Activated CD8-positive, alpha-beta T cell treated with anti-CD3 and anti-CD28 coated beads for 36 hours (primary cell): ENCODE measurements at regions of chr6 and their contacts with region 1.

Region 1: GRCh38 chr6:159134701-159135364 is 34.4 kb upstream of the FNDC1 start:
- DNase-seq: peak; percentile 88
- ATAC-seq: peak; percentile 99
- H3K4me3 Mint-ChIP-seq: no peak overlapping the region
- H3K27ac Mint-ChIP-seq: no peak overlapping the region
- H3K4me1 Mint-ChIP-seq: no peaks in the 10 kb centered on the region
- H3K27me3 Mint-ChIP-seq: peaks cover 5% of the 10 kb centered on the region
- CTCF ChIP-seq: peak; percentile 98

Region 2: GRCh38 chr6:158972241-158973233 is 162.3 kb before region 1 on chr6:
- CTCF ChIA-PET with region 1: interaction called, 43 read pairs
- POLR2A ChIA-PET with region 1: interaction called, 3 read pairs
- intact Hi-C with region 1: no loop called
- DNase-seq: no peak
- ATAC-seq: peak; percentile 71
- H3K4me3 Mint-ChIP-seq: no peak overlapping the region
- H3K27ac Mint-ChIP-seq: no peak overlapping the region
- H3K4me1 Mint-ChIP-seq: no peaks in the 10 kb centered on the region
- H3K27me3 Mint-ChIP-seq: no peaks in the 10 kb centered on the region
- CTCF ChIP-seq: peak; percentile 81

Region 3: DNA sequence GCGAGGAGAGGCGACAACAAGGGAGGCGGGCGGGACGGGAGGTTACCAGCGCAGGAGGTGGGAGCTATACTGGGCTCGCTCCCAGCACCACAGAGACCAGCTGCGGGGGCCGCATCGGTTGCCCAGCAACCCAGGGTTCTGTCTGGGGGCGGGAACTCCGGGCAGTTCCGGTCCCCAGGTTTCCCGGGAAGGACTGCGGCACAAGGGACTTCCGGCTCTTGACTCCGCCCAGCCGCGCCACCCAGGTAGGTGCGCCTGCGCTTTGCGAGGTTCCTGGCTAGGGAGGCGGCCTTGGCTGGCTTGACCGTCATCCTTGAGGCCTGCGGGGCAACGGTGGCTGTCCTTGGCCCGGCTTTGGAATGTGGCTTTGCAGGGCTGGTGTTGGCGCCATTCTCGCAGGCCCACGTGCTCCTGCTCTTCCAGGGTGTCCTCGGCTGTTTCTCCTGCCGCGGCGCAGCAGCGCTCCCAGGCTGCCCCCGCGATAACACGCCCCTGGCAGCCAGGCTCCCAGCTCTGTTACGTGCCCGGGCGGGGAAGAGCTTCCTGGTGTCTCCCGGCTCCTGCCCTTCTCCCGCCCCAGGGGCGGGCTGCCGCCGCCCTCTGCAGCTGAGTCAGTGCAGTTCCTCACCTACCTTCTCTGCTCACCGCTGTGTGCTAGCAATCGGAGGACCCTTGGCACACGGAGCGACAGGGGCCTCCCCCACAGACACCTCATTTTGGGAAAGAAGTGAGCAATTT is 135.0 kb before region 1 on chr6 and contains the start of gene RSPH3:
- CTCF ChIA-PET with region 1: interaction called, 246 read pairs
- POLR2A ChIA-PET with region 1: no interaction called
- intact Hi-C with region 1: no loop called
- DNase-seq: peak; percentile 96
- ATAC-seq: peak; percentile 89
- H3K4me3 Mint-ChIP-seq: peak within 1 kb of the TSS; percentile 83
- H3K27ac Mint-ChIP-seq: peak within 1 kb of the TSS; percentile 81
- H3K4me1 Mint-ChIP-seq: peaks cover 42% of the 10 kb centered on the region
- H3K27me3 Mint-ChIP-seq: no peaks in the 10 kb centered on the region
- CTCF ChIP-seq: no peak
- total RNA-seq, gene RSPH3: 4.2 TPM

Region 4: DNA sequence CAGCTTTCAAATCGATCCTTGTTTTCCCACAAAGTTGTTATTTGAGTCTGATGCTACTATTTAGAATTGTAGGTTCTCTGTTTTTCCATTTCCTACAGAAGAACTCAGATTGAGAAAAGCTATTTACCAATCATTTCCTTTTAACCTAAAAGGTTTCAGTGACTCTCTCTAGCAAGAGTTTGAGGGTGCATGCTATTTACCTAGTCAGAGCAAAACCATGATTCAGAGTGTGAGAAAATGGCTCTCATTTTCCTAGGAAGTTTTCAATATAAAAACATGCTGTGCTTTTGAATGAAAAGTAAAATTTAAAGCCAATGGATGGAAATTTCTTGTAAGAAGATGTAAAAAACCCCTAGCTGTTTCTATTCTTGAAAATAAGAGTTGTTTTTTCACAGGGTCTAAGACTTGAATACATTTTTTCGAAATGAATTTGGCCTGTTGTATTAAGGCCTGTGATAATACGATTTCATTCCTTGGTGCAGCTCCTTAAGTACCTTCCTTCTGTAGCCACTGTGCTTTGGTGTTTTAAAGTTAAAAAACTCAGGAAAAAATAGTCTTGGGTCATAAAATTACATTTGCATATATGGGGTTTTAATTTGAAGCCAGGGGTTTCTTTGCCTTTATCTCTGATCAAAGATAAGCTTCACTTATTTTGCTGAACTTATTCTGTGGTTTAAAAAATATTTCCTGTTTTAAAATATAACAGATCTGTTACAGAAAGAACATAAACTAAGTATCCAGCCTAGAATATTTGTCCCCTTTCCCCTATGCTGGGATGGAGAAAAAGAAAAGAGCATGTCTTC is 116.9 kb before region 1 on chr6:
- CTCF ChIA-PET with region 1: interaction called, 16 read pairs
- POLR2A ChIA-PET with region 1: no interaction called
- intact Hi-C with region 1: no loop called
- DNase-seq: no peak
- ATAC-seq: peak; percentile 85
- H3K4me3 Mint-ChIP-seq: peak overlapping the region; percentile 14
- H3K27ac Mint-ChIP-seq: peak overlapping the region; percentile 96
- H3K4me1 Mint-ChIP-seq: peaks cover 68% of the 10 kb centered on the region
- H3K27me3 Mint-ChIP-seq: no peaks in the 10 kb centered on the region
- CTCF ChIP-seq: no peak

Region 5: DNA sequence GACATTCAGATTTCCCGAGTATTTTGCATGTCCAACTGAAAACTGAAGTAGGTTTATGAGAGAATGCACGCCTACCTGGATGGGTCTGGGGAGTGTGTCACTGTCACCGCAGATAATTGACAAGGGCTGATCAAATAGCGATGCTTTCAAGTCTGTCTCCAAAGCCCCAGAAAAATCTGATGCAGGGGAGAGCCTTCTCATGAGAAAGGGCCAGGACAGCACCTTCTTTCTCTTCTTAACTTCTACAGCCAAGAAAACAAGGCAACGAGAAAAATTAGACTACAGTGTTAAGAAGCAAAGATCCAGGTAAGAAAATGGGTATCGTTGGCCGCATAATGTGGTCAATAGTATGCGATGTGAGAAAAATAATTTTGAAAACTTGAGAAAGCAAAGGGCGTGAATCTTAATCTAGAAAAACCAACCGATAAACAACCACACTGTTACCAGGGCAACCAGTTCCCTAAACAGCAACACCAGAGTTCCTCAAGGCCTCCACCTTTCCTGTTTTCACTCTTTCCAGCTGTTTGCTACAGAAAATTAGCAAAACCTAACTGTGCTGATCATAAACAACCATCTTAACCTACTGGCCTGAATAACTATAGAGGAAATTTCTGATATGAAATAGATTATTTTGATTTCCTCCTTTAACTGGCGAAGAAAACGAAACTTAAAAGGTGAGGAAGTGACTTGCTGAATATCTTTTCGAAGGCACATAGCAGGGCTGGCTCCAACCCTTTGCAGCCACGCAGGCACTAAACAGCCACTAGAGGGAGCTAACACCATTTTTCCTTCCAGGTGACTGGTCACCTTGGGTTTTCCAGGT is 92.6 kb before region 1 on chr6:
- CTCF ChIA-PET with region 1: interaction called, 29 read pairs
- POLR2A ChIA-PET with region 1: interaction called, 3 read pairs
- intact Hi-C with region 1: no loop called
- DNase-seq: peak; percentile 82
- ATAC-seq: peak; percentile 21
- H3K4me3 Mint-ChIP-seq: peak overlapping the region; percentile 100
- H3K27ac Mint-ChIP-seq: peak overlapping the region; percentile 100
- H3K4me1 Mint-ChIP-seq: peaks cover 53% of the 10 kb centered on the region
- H3K27me3 Mint-ChIP-seq: no peaks in the 10 kb centered on the region
- CTCF ChIP-seq: peak; percentile 96

Region 6: DNA sequence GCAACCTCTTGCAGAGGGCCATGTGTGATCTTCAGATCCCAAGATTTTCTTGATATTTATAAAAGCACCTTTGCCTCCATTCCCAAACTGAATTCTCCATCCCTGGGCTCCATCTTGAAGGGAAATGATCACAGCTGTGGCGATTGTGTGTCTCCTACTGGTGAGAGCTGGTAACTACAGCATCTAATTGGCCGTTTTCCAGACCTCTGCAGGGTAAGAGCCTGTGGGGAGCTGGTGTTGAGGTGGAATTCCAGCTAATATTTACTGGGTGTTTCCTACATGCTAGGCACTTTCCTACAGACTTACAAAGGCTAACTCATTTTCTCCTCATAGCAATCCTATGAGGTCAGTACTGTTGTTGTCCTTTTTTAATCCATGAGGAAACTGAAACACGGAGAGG is 24.8 kb before region 1 on chr6:
- CTCF ChIA-PET with region 1: interaction called, 71 read pairs
- POLR2A ChIA-PET with region 1: interaction called, 5 read pairs
- intact Hi-C with region 1: no loop called
- DNase-seq: peak; percentile 52
- ATAC-seq: no peak
- H3K4me3 Mint-ChIP-seq: no peak overlapping the region
- H3K27ac Mint-ChIP-seq: peak overlapping the region; percentile 40
- H3K4me1 Mint-ChIP-seq: peaks cover 52% of the 10 kb centered on the region
- H3K27me3 Mint-ChIP-seq: no peaks in the 10 kb centered on the region
- CTCF ChIP-seq: peak; percentile 95

Region 7: DNA sequence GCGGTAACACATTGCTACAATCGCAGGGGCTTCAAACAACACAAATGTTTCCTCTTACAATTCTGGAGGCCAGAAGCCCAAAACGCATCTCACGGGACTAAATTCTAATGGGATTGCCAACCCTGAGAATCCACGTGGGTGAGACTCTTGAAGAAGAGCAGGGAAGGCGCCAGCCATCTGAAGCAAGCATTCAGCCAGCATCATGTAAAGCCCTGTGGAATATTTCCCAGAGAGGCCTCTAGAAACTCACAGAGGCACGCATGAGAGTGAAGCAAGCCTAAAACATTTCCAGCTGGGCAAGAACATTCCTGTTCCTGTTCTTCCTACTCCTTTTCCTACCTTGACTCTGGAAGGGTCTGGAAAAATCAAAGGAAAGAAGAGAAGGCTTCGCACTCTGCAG is 14.8 kb after region 1 on chr6:
- CTCF ChIA-PET with region 1: interaction called, 73 read pairs
- POLR2A ChIA-PET with region 1: interaction called, 3 read pairs
- intact Hi-C with region 1: no loop called
- DNase-seq: no peak
- ATAC-seq: no peak
- H3K4me3 Mint-ChIP-seq: no peak overlapping the region
- H3K27ac Mint-ChIP-seq: no peak overlapping the region
- H3K4me1 Mint-ChIP-seq: peaks cover 2% of the 10 kb centered on the region
- H3K27me3 Mint-ChIP-seq: peaks cover 3% of the 10 kb centered on the region
- CTCF ChIP-seq: no peak

Region 8: DNA sequence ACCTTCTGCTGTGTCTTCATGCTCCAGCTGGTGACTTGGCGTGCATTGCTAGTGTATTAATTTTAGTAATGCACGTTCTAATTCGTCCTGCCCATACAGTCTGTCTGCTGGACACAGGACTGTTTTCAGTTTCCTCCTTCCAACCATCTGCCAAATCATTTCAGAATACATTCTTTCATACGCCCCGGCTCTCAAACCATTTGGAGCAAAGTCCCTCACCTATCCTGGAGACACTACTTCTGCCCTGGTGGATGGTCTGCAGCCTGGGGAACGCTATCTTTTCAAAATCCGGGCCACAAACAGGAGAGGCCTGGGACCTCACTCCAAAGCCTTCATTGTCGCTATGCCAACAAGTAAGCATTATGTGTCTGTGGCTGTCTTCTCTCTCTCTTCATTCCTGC is 94.8 kb after region 1 on chr6:
- CTCF ChIA-PET with region 1: no interaction called
- POLR2A ChIA-PET with region 1: no interaction called
- intact Hi-C with region 1: no loop called
- DNase-seq: no peak
- ATAC-seq: no peak
- H3K4me3 Mint-ChIP-seq: no peak overlapping the region
- H3K27ac Mint-ChIP-seq: no peak overlapping the region
- H3K4me1 Mint-ChIP-seq: peaks cover 2% of the 10 kb centered on the region
- H3K27me3 Mint-ChIP-seq: peaks cover 31% of the 10 kb centered on the region
- CTCF ChIP-seq: no peak